ENCODE measurements at regions of chr1 and their contacts with region 1.

Region 1: GRCh38 chr1:9629445-9630201 is 21.9 kb upstream of the PIK3CD start:
- DNase-seq: peak; percentile 53 to 86 (median 83)
- ATAC-seq: peak; percentile 69
- H3K4me3 ChIP-seq: peak overlapping the region; percentile 64
- H3K4me3 Mint-ChIP-seq: peak overlapping the region; percentile 90 to 100 (median 98)
- H3K27ac ChIP-seq: peak overlapping the region; percentile 87
- H3K27ac Mint-ChIP-seq: peak overlapping the region; percentile 85 to 98 (median 94)
- H3K4me1 ChIP-seq: peaks cover 35 to 38% of the 10 kb centered on the region in 2 donors
- H3K4me1 Mint-ChIP-seq: peaks cover 46 to 72% (median 65%) of the 10 kb centered on the region in 7 donors
- H3K27me3 ChIP-seq: no peaks in the 10 kb centered on the region
- H3K27me3 Mint-ChIP-seq: peaks cover 0 to 2% (median 0%) of the 10 kb centered on the region in 5 donors

Region 2: GRCh38 chr1:9651565-9652378 is 22.1 kb after region 1 on chr1 and contains the start of gene PIK3CD:
- CTCF ChIA-PET with region 1: interaction called, 112 read pairs
- POLR2A ChIA-PET with region 1: interaction called, 439 read pairs
- intact Hi-C with region 1: loop called (anchors 1 kb)
- DNase-seq: peak in 6 of 9 donors; percentile 14 to 59 (median 32)
- ATAC-seq: peak; percentile 49
- H3K4me3 ChIP-seq: peak within 1 kb of the TSS; percentile 84
- H3K4me3 Mint-ChIP-seq: peak within 1 kb of the TSS; percentile 96 to 100 (median 99)
- H3K27ac ChIP-seq: peak within 1 kb of the TSS; percentile 79
- H3K27ac Mint-ChIP-seq: peak within 1 kb of the TSS; percentile 95 to 99 (median 98)
- H3K4me1 ChIP-seq: peaks cover 27 to 46% of the 10 kb centered on the region in 2 donors
- H3K4me1 Mint-ChIP-seq: peaks cover 26 to 70% (median 61%) of the 10 kb centered on the region in 7 donors
- H3K27me3 ChIP-seq: no peaks in the 10 kb centered on the region
- H3K27me3 Mint-ChIP-seq: no peaks in the 10 kb centered on the region
- total RNA-seq, gene PIK3CD: 269 to 313 (median 283) TPM

Region 3: GRCh38 chr1:9676815-9677393 is 47.3 kb after region 1 on chr1:
- CTCF ChIA-PET with region 1: interaction called, 3 read pairs
- POLR2A ChIA-PET with region 1: interaction called, 19 read pairs
- intact Hi-C with region 1: no loop called
- DNase-seq: no peak
- ATAC-seq: no peak
- H3K4me3 ChIP-seq: no peak overlapping the region
- H3K4me3 Mint-ChIP-seq: peak overlapping the region; percentile 11 to 71 (median 36)
- H3K27ac ChIP-seq: peak overlapping the region; percentile 60
- H3K27ac Mint-ChIP-seq: peak overlapping the region in 8 of 9 donors; percentile 44 to 92 (median 88)
- H3K4me1 ChIP-seq: peaks cover 40 to 46% of the 10 kb centered on the region in 2 donors
- H3K4me1 Mint-ChIP-seq: peaks cover 52 to 90% (median 71%) of the 10 kb centered on the region in 7 donors
- H3K27me3 ChIP-seq: no peaks in the 10 kb centered on the region
- H3K27me3 Mint-ChIP-seq: no peaks in the 10 kb centered on the region

Region 4: DNA sequence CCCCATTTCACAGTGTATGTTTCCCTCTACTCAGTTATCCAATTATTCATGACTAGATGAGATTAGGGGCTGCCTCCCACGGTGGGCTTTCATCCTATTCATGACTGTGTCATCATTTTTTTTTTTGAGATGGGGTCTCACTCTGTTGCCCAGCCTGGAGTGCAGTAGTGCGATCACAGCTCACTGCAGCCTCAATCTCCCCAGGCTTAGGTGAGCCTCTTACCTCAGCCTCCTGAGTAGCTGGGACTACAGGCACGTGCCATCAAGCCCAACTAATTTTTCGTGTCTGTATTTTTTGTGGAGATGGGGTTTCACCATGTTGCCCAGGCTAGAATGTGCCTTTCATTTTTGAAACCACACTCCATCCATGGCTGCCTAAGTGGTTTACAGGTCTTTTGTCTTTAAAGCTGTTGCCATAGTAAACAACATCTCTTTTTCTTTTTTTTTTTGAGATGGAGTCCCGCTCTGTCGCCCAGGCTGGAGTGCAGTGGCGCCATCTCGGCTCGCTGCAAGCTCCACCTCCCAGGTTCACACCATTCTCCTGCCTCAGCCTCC is 81.9 kb after region 1 on chr1:
- CTCF ChIA-PET with region 1: interaction called, 109 read pairs
- POLR2A ChIA-PET with region 1: interaction called, 320 read pairs
- intact Hi-C with region 1: no loop called
- DNase-seq: no peak
- ATAC-seq: peak; percentile 36
- H3K4me3 ChIP-seq: no peak overlapping the region
- H3K4me3 Mint-ChIP-seq: peak overlapping the region in 3 of 10 donors; percentile 9 to 29 (median 26)
- H3K27ac ChIP-seq: peak overlapping the region; percentile 31
- H3K27ac Mint-ChIP-seq: peak overlapping the region; percentile 19 to 91 (median 78)
- H3K4me1 ChIP-seq: peaks cover 25 to 49% of the 10 kb centered on the region in 2 donors
- H3K4me1 Mint-ChIP-seq: peaks cover 16 to 77% (median 60%) of the 10 kb centered on the region in 7 donors
- H3K27me3 ChIP-seq: no peaks in the 10 kb centered on the region
- H3K27me3 Mint-ChIP-seq: no peaks in the 10 kb centered on the region

Region 5: DNA sequence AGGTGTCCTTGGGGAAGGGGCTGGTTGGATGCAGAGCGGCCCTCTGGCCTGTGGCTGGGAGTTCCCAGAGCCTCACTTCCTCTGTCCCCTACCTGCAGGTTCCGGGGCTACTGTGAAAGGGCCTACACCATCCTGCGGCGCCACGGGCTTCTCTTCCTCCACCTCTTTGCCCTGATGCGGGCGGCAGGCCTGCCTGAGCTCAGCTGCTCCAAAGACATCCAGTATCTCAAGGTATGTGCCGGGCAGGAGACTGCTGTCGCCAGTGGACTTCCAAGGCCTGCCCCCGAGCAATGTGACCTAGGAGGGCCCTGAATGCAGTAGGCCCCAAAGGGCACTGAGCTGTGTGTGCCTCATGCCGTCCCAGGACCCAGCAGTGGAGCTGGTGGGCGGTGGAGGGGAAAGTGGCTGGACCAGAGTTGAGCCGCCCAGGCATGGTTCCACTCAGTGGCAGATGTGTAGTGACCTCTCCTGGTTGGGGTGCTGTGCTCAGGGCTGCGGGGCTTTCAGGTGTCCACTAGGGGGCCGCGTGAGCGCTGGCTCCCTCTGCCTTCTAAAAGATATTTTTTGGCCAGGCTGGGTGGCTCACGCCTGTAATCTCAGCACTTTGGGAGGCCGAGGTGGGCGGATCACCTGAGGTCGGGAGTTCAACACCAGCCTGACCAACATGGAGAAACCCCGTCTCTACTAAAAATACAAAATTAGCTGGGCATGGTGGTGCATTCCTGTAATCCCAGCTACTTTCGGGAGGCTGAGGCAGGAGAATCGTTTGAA is 95.3 kb after region 1 on chr1:
- CTCF ChIA-PET with region 1: interaction called, 109 read pairs
- POLR2A ChIA-PET with region 1: interaction called, 159 read pairs
- intact Hi-C with region 1: loop called (anchors 1 kb)
- DNase-seq: peak; percentile 58 to 72 (median 64)
- ATAC-seq: peak; percentile 65
- H3K4me3 ChIP-seq: no peak overlapping the region
- H3K4me3 Mint-ChIP-seq: peak overlapping the region in 8 of 10 donors; percentile 14 to 68 (median 62)
- H3K27ac ChIP-seq: peak overlapping the region; percentile 51
- H3K27ac Mint-ChIP-seq: peak overlapping the region; percentile 73 to 88 (median 80)
- H3K4me1 ChIP-seq: peaks cover 36 to 83% of the 10 kb centered on the region in 2 donors
- H3K4me1 Mint-ChIP-seq: peaks cover 38 to 84% (median 60%) of the 10 kb centered on the region in 7 donors
- H3K27me3 ChIP-seq: no peaks in the 10 kb centered on the region
- H3K27me3 Mint-ChIP-seq: no peaks in the 10 kb centered on the region

Region 6: GRCh38 chr1:9823943-9824701 is 194.5 kb after region 1 on chr1 and contains the start of gene CLSTN1:
- CTCF ChIA-PET with region 1: interaction called, 5 read pairs
- POLR2A ChIA-PET with region 1: interaction called, 5 read pairs
- intact Hi-C with region 1: loop called in 1 of 2 experiments (anchors 1 kb)
- DNase-seq: peak; percentile 73 to 88 (median 84)
- ATAC-seq: peak; percentile 86
- H3K4me3 ChIP-seq: peak within 1 kb of the TSS; percentile 82
- H3K4me3 Mint-ChIP-seq: peak within 1 kb of the TSS; percentile 95 to 99 (median 98)
- H3K27ac ChIP-seq: peak within 1 kb of the TSS; percentile 68
- H3K27ac Mint-ChIP-seq: peak within 1 kb of the TSS; percentile 80 to 97 (median 93)
- H3K4me1 ChIP-seq: peaks cover 24 to 34% of the 10 kb centered on the region in 2 donors
- H3K4me1 Mint-ChIP-seq: peaks cover 31 to 52% (median 46%) of the 10 kb centered on the region in 7 donors
- H3K27me3 ChIP-seq: no peaks in the 10 kb centered on the region
- H3K27me3 Mint-ChIP-seq: peaks cover 0 to 3% (median 0%) of the 10 kb centered on the region in 5 donors
- total RNA-seq, gene CLSTN1: 68.6 to 116 (median 85.6) TPM

Region 7: GRCh38 chr1:11168731-11169130 is 1539.1 kb after region 1 on chr1:
- CTCF ChIA-PET with region 1: no interaction called
- POLR2A ChIA-PET with region 1: interaction called, 10 read pairs
- intact Hi-C with region 1: no loop called
- DNase-seq: no peak
- ATAC-seq: no peak
- H3K4me3 ChIP-seq: no peak overlapping the region
- H3K4me3 Mint-ChIP-seq: no peak overlapping the region
- H3K27ac ChIP-seq: no peak overlapping the region
- H3K27ac Mint-ChIP-seq: peak overlapping the region in 1 of 9 donors; percentile 15
- H3K4me1 ChIP-seq: no peaks in the 10 kb centered on the region
- H3K4me1 Mint-ChIP-seq: peaks cover 0 to 1% (median 0%) of the 10 kb centered on the region in 7 donors
- H3K27me3 ChIP-seq: no peaks in the 10 kb centered on the region
- H3K27me3 Mint-ChIP-seq: no peaks in the 10 kb centered on the region